OCI-LY7 (cell line): ENCODE measurements at regions of chr2 and their contacts with region 1.

Region 1: GRCh38 chr2:96773922-96774321 is 13.2 kb downstream of the CNNM4 start:
- DNase-seq: peak; percentile 79
- H3K4me3 ChIP-seq: peak overlapping the region; percentile 65
- H3K27ac ChIP-seq: peak overlapping the region; percentile 58
- H3K4me1 ChIP-seq: peaks cover 65% of the 10 kb centered on the region
- CTCF ChIP-seq: no peak

Region 2: GRCh38 chr2:95179451-95179850 is 1594.5 kb before region 1 on chr2:
- CTCF ChIA-PET with region 1: no interaction called
- POLR2A ChIA-PET with region 1: no interaction called
- intact Hi-C with region 1: no loop called
- DNase-seq: no peak
- H3K4me3 ChIP-seq: no peak overlapping the region
- H3K27ac ChIP-seq: no peak overlapping the region
- H3K4me1 ChIP-seq: no peaks in the 10 kb centered on the region
- CTCF ChIP-seq: no peak

Region 3: DNA sequence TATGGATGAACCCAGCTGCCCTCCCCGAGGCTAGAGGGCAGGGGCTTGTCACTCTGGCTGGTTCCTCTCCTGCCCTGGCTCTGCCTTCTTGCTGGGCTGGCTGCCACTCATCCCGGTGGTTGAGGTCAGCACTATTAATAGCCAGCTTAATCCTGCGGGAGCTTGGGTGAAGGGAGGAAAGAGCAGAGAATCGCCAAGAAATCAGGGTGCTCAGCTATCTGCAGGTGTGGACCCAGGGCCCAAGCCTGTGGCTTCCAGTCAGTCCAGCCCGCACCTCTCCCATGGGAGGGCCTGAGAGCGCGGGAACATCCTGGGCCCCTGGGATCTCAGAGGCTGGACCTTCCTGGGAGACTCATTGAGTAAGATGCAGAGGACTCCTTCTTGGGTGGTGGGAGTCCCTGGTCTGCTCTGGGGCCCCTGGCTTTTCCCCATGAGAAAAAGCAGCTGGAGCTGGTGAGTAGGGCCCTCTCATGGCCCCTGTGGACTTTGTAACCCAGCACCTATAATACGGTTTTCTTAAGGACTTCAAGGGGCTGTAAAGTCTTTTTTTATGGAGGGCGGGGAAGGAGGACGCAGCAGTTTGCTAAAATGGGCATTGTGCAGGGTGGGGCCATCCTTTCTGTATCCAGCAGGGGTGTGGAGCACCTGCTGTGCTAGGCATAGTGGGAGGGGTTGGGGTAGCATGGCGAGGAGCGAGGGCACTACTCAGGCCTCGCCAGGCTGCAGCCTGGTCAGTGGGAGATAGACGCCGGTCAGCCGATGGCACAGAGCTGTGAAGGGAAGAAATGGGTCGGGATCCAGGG is 14.7 kb after region 1 on chr2:
- CTCF ChIA-PET with region 1: no interaction called
- POLR2A ChIA-PET with region 1: interaction called, 19 read pairs
- intact Hi-C with region 1: no loop called
- DNase-seq: no peak
- H3K4me3 ChIP-seq: no peak overlapping the region
- H3K27ac ChIP-seq: no peak overlapping the region
- H3K4me1 ChIP-seq: no peaks in the 10 kb centered on the region
- CTCF ChIP-seq: no peak

Region 4: DNA sequence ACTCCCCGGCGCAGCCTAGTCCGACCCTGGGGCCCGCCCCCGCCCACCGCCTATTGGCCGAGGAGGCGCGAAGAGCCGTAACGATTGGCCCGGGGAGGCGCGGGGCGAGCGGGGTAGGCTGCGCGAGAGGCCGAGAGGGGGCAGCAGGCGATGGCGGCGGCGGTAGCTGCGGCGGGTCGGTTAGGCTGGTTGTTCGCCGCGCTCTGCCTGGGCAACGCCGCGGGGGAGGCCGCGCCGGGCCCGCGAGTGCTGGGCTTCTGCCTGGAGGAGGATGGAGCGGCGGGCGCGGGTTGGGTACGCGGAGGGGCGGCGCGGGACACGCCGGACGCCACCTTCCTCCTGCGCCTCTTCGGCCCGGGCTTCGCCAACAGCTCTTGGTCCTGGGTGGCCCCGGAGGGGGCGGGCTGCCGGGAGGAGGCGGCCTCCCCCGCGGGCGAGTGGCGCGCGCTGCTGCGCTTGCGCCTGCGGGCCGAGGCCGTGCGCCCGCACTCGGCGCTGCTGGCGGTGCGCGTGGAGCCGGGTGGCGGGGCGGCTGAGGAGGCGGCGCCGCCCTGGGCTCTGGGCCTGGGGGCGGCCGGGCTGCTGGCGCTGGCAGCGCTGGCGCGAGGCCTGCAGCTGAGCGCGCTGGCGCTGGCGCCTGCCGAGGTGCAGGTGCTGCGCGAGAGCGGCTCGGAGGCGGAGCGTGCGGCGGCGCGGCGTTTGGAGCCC is 42.4 kb after region 1 on chr2 and contains the start of gene CNNM3:
- CTCF ChIA-PET with region 1: no interaction called
- POLR2A ChIA-PET with region 1: interaction called, 12 read pairs
- intact Hi-C with region 1: no loop called
- DNase-seq: peak; percentile 94
- H3K4me3 ChIP-seq: peak within 1 kb of the TSS; percentile 90
- H3K27ac ChIP-seq: peak within 1 kb of the TSS; percentile 58
- H3K4me1 ChIP-seq: peaks cover 46% of the 10 kb centered on the region
- CTCF ChIP-seq: peak; percentile 61
- total RNA-seq, gene CNNM3: 9.1 and 13.5 TPM in 2 replicates